Naive thymus-derived CD4-positive, alpha-beta T cell (primary cell): ENCODE measurements at regions of chr10 and their contacts with region 1.

Region 1: DNA sequence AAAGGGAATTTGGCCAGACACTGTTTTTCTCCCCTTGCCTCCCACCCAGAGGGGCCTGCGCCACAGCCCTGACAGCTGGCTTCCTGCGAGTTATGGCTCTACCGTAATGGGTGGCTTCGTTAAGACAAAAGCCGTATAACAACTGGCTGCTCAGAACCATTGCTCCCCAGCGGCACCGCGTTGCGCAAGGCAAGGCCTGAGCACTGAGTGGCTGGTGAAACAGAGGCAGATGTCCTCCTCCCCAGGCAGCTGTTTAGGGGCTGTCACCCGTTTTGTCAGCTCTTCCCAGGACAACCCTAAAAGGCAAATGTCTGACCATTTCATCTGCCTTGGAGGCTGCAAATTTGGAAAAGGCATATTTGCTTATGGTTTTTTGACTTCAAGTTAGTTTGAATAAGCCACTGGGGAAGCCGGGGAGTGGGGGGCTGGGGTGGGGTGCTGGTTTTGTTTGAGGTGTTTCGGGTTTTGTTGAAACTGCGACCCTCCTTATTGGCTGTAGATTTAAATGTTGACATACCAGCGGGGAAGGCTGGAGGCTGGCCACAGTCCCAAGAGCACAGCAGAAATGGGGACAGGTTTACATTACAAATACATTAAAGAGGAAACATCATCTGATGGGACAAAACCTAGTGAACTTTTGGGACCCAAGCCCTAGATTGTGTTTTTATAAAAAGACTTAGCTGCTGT is 681 bp upstream of the SPOCK2 start:
- DNase-seq: peak in 5 of 9 donors; percentile 37 to 79 (median 78)
- ATAC-seq: peak; percentile 54
- H3K4me3 ChIP-seq: peak overlapping the region; percentile 98
- H3K4me3 Mint-ChIP-seq: peak overlapping the region; percentile 88 to 100 (median 98)
- H3K27ac ChIP-seq: peak overlapping the region; percentile 99
- H3K27ac Mint-ChIP-seq: peak overlapping the region; percentile 96 to 100 (median 99)
- H3K4me1 ChIP-seq: peaks cover 39 to 49% of the 10 kb centered on the region in 2 donors
- H3K4me1 Mint-ChIP-seq: peaks cover 24 to 60% (median 50%) of the 10 kb centered on the region in 7 donors
- H3K27me3 ChIP-seq: no peaks in the 10 kb centered on the region
- H3K27me3 Mint-ChIP-seq: no peaks in the 10 kb centered on the region

Region 2: DNA sequence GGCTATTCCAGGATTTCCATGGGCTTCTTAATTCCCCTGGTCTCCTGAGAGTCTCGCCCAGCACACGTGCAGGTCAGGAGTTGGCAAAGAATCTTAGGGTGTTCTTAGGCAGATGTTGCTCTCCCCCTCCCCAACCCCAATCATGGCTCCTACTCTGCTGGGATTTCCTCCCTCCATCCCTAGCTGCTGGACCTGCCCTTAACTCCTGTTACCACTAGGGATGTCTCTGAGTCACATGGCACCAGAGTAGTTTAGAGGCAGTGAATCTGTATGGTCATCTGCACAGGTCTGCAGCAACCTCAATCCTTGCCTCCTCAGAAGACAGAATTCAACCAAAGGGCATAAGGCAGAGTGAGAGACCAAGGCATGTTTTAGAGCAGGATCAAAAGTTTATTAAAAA is 176.6 kb before region 1 on chr10:
- CTCF ChIA-PET with region 1: no interaction called
- POLR2A ChIA-PET with region 1: no interaction called
- intact Hi-C with region 1: no loop called
- DNase-seq: no peak
- ATAC-seq: no peak
- H3K4me3 ChIP-seq: no peak overlapping the region
- H3K4me3 Mint-ChIP-seq: no peak overlapping the region
- H3K27ac ChIP-seq: no peak overlapping the region
- H3K27ac Mint-ChIP-seq: peak overlapping the region in 1 of 9 donors; percentile 72
- H3K4me1 ChIP-seq: no peaks in the 10 kb centered on the region
- H3K4me1 Mint-ChIP-seq: peaks cover 0 to 20% (median 14%) of the 10 kb centered on the region in 7 donors
- H3K27me3 ChIP-seq: peaks cover 0 to 3% of the 10 kb centered on the region in 2 donors
- H3K27me3 Mint-ChIP-seq: peaks cover 0 to 7% (median 0%) of the 10 kb centered on the region in 5 donors

Region 3: GRCh38 chr10:72048450-72049124 is 40.4 kb before region 1 on chr10:
- CTCF ChIA-PET with region 1: interaction called, 6 read pairs
- POLR2A ChIA-PET with region 1: interaction called, 9 read pairs
- intact Hi-C with region 1: loop called (anchors 1 to 2 kb)
- DNase-seq: peak; percentile 68 to 88 (median 83)
- ATAC-seq: peak; percentile 99
- H3K4me3 ChIP-seq: no peak overlapping the region
- H3K4me3 Mint-ChIP-seq: no peak overlapping the region
- H3K27ac ChIP-seq: no peak overlapping the region
- H3K27ac Mint-ChIP-seq: peak overlapping the region in 6 of 9 donors; percentile 5 to 67 (median 32)
- H3K4me1 ChIP-seq: no peaks in the 10 kb centered on the region
- H3K4me1 Mint-ChIP-seq: peaks cover 7 to 10% (median 8%) of the 10 kb centered on the region in 7 donors
- H3K27me3 ChIP-seq: no peaks in the 10 kb centered on the region
- H3K27me3 Mint-ChIP-seq: no peaks in the 10 kb centered on the region

Region 4: GRCh38 chr10:72107325-72108003 is 18.4 kb after region 1 on chr10:
- CTCF ChIA-PET with region 1: interaction called, 13 read pairs
- POLR2A ChIA-PET with region 1: interaction called, 297 read pairs
- intact Hi-C with region 1: loop called (anchors 1 kb)
- DNase-seq: peak in 7 of 9 donors; percentile 63 to 77 (median 74)
- ATAC-seq: peak; percentile 82
- H3K4me3 ChIP-seq: peak overlapping the region; percentile 10
- H3K4me3 Mint-ChIP-seq: peak overlapping the region; percentile 67 to 85 (median 78)
- H3K27ac ChIP-seq: peak overlapping the region; percentile 72
- H3K27ac Mint-ChIP-seq: peak overlapping the region; percentile 79 to 96 (median 89)
- H3K4me1 ChIP-seq: peaks cover 32 to 84% of the 10 kb centered on the region in 2 donors
- H3K4me1 Mint-ChIP-seq: peaks cover 53 to 96% (median 89%) of the 10 kb centered on the region in 7 donors
- H3K27me3 ChIP-seq: no peaks in the 10 kb centered on the region
- H3K27me3 Mint-ChIP-seq: no peaks in the 10 kb centered on the region

Region 5: GRCh38 chr10:72133517-72133916 is 44.5 kb after region 1 on chr10:
- CTCF ChIA-PET with region 1: interaction called, 7 read pairs
- POLR2A ChIA-PET with region 1: interaction called, 77 read pairs
- intact Hi-C with region 1: loop called in 1 of 2 experiments (anchors 2 kb)
- DNase-seq: no peak
- ATAC-seq: peak; percentile 74
- H3K4me3 ChIP-seq: no peak overlapping the region
- H3K4me3 Mint-ChIP-seq: peak overlapping the region in 1 of 10 donors; percentile 56
- H3K27ac ChIP-seq: no peak overlapping the region
- H3K27ac Mint-ChIP-seq: peak overlapping the region; percentile 16 to 94 (median 83)
- H3K4me1 ChIP-seq: peaks cover 0 to 19% of the 10 kb centered on the region in 2 donors
- H3K4me1 Mint-ChIP-seq: peaks cover 22 to 46% (median 37%) of the 10 kb centered on the region in 7 donors
- H3K27me3 ChIP-seq: no peaks in the 10 kb centered on the region
- H3K27me3 Mint-ChIP-seq: no peaks in the 10 kb centered on the region

Region 6: DNA sequence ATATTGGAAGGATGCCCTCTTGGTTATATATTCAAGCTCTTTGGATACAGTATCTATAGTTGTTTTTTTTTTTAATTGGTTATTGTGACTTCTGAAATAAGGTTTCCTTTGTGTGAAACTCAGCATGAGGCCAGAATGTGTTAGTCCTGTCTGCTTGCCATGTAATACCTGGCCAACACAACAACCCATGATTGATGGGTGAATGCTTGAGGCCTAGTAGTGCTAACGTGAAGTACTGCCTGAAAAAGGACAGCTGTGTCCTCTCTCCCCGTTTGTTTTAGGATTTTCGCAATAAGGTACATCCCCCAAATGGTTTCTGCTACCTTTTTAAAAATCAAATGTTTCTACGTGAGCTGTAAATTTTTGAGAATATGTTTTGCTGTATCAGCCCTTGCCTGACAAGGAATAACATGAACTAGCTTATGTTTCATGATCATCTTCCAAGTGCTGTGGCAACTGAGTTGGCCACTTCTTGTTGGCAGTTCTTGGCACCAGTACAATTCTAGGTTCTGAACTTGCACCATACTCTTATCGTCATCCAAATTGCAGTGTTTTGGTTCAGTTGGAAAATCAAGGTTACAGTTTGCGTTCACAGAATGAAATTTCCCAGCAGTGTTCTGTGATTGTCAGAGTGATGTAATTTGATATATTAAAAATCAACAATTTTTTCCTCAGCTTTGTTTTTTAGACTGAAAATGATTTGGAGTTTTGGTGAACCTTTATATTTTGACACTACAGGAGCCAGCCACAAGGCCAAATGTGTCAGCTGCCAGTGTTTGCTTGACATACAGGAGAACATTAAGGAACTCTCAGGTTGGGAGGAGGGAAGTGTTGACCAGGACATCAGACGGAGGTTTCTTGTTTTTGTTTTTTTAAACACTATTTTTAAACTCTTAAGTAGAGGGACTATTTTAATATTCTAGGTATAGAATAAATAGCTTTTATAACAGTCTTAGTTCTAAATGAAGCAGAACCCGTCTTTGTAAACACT is 140.5 kb after region 1 on chr10:
- CTCF ChIA-PET with region 1: interaction called, 6 read pairs
- POLR2A ChIA-PET with region 1: interaction called, 10 read pairs
- intact Hi-C with region 1: no loop called
- DNase-seq: no peak
- ATAC-seq: no peak
- H3K4me3 ChIP-seq: no peak overlapping the region
- H3K4me3 Mint-ChIP-seq: peak overlapping the region in 6 of 10 donors; percentile 1 to 52 (median 44)
- H3K27ac ChIP-seq: peak overlapping the region; percentile 42
- H3K27ac Mint-ChIP-seq: peak overlapping the region; percentile 3 to 86 (median 72)
- H3K4me1 ChIP-seq: peaks cover 10 to 36% of the 10 kb centered on the region in 2 donors
- H3K4me1 Mint-ChIP-seq: peaks cover 28 to 52% (median 48%) of the 10 kb centered on the region in 7 donors
- H3K27me3 ChIP-seq: no peaks in the 10 kb centered on the region
- H3K27me3 Mint-ChIP-seq: no peaks in the 10 kb centered on the region

Region 7: DNA sequence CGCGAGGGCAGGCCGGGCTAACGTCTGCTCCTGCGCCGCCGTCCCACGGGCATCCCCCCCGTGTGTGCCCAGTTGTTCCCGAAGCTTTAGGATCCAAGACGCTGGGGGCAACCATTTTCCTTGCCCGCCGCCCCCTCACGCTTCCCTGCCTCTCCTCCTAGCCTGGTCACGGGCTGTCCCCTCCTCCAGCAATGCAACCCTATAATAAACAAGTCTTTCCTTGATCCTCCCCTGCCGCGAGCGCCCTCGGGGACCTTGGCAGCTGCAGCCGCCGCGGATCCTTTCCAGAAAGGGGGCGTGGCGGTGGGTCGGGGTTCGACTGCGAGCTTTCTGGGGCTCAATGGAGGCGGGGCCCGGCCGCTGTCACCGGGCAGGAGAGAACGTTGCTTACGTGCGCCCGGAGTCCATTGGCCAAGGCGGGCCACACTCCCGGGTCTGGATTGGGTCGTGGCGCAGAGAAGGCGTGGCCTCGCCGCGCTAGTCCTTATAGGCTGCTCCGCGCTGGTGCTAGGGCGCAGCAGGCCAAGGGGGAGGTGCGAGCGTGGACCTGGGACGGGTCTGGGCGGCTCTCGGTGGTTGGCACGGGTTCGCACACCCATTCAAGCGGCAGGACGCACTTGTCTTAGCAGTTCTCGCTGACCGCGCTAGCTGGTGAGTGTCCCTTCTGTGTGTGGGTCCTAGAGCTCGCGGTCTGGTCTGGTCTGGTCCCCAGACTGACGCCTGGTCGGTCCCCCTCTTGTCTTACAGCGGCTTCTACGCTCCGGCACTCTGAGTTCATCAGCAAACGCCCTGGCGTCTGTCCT is 184.6 kb after region 1 on chr10 and contains the start of gene DDIT4:
- CTCF ChIA-PET with region 1: interaction called, 4 read pairs
- POLR2A ChIA-PET with region 1: interaction called, 4 read pairs
- intact Hi-C with region 1: loop called in 1 of 2 experiments (anchors 1 kb)
- DNase-seq: peak; percentile 92 to 98 (median 97)
- ATAC-seq: peak; percentile 97
- H3K4me3 ChIP-seq: peak within 1 kb of the TSS; percentile 95
- H3K4me3 Mint-ChIP-seq: peak within 1 kb of the TSS; percentile 97 to 100 (median 99)
- H3K27ac ChIP-seq: peak within 1 kb of the TSS; percentile 96
- H3K27ac Mint-ChIP-seq: peak within 1 kb of the TSS; percentile 93 to 98 (median 95)
- H3K4me1 ChIP-seq: peaks cover 9 to 20% of the 10 kb centered on the region in 2 donors
- H3K4me1 Mint-ChIP-seq: peaks cover 34 to 63% (median 59%) of the 10 kb centered on the region in 7 donors
- H3K27me3 ChIP-seq: no peaks in the 10 kb centered on the region
- H3K27me3 Mint-ChIP-seq: no peaks in the 10 kb centered on the region
- total RNA-seq, gene DDIT4: 25.4 to 335 (median 135) TPM

Region 8: DNA sequence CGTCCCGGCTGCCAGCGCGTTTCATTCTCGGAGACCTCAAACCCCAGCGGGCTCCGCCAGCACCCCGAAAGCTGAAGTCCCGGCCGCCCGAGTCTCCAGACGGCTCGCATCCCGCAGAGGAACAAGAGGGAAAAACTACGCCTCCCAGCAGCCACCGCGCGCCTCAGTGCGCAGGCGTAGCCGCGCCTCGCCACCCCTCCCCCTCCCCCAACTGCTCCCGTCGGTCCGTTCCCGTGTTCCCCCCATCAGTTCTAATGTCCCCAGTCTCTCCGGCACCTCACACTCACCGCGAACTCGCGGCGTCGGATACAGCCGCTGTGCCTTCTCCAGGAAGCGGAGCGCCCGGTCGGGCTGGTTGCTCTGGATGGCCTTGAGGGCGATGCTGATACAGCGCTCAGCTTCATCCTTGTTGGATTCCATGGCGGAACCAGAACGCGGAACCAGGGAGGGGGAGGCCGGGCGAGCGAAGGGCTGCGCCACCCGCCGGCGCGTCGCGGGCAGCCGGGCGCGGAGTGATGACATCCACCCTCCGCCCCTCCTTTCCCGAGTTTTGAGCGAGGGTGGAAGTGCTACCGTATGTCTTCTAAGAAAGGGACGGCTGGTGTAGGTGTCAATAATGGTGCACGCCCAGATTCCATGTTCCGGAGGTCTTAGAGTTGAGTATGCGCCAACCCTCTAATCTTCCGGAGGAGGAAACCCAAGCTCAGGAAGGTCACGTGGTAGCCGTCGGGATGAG is 265.6 kb after region 1 on chr10 and contains the start of gene DNAJB12:
- CTCF ChIA-PET with region 1: no interaction called
- POLR2A ChIA-PET with region 1: interaction called, 5 read pairs
- intact Hi-C with region 1: loop called in 1 of 2 experiments (anchors 1 kb)
- DNase-seq: peak; percentile 90 to 96 (median 94)
- ATAC-seq: peak; percentile 94
- H3K4me3 ChIP-seq: peak within 1 kb of the TSS; percentile 98
- H3K4me3 Mint-ChIP-seq: peak within 1 kb of the TSS; percentile 93 to 99 (median 96)
- H3K27ac ChIP-seq: peak within 1 kb of the TSS; percentile 88
- H3K27ac Mint-ChIP-seq: peak within 1 kb of the TSS; percentile 93 to 100 (median 97)
- H3K4me1 ChIP-seq: peaks cover 8 to 13% of the 10 kb centered on the region in 2 donors
- H3K4me1 Mint-ChIP-seq: peaks cover 31 to 59% (median 46%) of the 10 kb centered on the region in 7 donors
- H3K27me3 ChIP-seq: no peaks in the 10 kb centered on the region
- H3K27me3 Mint-ChIP-seq: no peaks in the 10 kb centered on the region
- total RNA-seq, gene DNAJB12: 24.6 to 40.5 (median 36.2) TPM